WTC11 (cell line): ENCODE measurements at regions of chr2 and their contacts with region 1.

Region 1: DNA sequence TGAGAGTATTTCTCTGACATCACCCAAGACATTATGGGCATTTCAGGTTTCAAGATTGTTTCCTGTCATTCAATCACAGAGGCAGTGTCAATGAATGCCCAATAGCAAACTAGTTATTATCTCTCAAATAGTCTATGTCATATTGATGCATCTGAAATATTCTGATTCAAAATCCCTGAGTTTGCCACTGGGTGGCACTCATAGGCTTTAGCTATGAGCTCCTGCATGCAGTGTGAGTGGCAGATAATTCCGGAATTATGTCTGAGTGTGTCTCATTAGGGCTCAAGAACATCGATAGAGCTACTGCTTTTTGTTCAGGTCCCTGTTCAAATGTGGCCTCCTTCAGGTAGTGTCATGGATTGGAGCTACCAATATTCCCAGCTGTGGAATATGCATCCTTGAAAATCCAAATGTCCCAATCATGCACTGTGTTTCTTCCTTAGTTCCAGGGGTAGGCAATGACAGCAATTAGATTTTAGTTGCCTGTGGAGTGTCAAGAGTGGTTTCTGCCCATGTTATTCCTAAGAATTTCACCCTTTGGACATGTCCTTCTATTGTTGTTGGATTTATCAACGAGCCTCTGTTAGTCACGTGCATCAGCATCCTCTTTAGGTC is 7.8 kb upstream of the OR6B3 start:
- DNase-seq: no peak
- ATAC-seq: peak; percentile 85
- H3K4me3 Mint-ChIP-seq: no peak overlapping the region
- H3K27ac Mint-ChIP-seq: no peak overlapping the region
- H3K4me1 Mint-ChIP-seq: peaks cover 17% of the 10 kb centered on the region
- H3K27me3 Mint-ChIP-seq: no peaks in the 10 kb centered on the region; the same call in 1 of the 2 replicates
- CTCF ChIP-seq: peak; percentile 11; the same call in 1 of the 2 replicates

Region 2: GRCh38 chr2:239498981-239499634 is 562.0 kb before region 1 on chr2:
- CTCF ChIA-PET with region 1: no interaction called
- POLR2A ChIA-PET with region 1: no interaction called
- DNase-seq: no peak
- ATAC-seq: no peak
- H3K4me3 Mint-ChIP-seq: no peak overlapping the region
- H3K27ac Mint-ChIP-seq: no peak overlapping the region
- H3K4me1 Mint-ChIP-seq: no peaks in the 10 kb centered on the region
- H3K27me3 Mint-ChIP-seq: no peaks in the 10 kb centered on the region
- CTCF ChIP-seq: no peak

Region 3: DNA sequence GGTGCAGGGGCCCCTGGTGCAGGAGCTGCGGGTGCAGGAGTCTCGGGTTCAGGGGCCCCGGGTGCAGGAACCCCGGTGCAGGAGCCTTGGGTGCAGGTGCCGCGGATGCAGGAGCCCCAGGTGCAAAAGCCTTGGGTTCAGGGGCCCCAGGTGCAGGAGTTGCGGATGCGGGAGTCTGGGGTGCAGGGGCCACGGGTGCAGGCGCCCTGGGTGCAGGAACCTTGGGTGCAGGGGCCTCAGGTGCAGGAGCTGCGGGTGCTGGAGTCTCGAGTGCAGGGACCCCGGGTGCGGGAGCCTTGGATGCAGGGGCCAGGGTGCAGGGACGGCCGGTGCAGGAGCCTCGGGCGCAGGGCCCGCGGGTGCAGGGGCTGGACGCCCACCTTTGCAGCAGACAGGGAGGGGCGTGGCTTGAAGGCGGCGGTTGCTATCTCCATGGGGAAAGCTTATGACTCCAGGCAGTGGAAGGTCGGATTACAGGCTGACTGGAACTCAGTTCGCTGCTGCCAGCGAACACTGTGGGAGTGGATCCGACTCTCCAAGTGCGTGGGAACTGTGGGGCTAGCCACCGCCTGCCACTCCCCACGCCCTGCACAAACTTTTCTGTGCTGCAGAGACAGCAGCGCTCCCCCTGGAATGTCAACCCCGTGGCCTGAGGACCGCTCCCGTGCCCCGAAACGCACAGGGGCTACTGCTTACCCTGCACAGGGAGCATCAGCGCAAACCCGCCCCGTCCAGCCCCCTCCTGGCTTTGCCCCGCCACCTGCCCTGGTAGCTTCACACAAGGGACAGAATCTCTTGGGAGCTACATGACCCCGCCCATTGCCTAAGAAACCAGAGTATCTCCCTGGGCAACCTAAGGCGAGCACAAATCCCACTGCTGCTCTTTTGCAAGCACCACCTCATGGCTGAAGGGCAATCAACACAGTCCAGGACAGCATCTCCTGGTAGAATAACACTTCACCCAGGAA is 34.8 kb after region 1 on chr2:
- CTCF ChIA-PET with region 1: interaction called, 14 read pairs
- POLR2A ChIA-PET with region 1: no interaction called
- DNase-seq: peak; percentile 63
- ATAC-seq: peak; percentile 93
- H3K4me3 Mint-ChIP-seq: peak overlapping the region; percentile 81
- H3K27ac Mint-ChIP-seq: no peak overlapping the region
- H3K4me1 Mint-ChIP-seq: peaks cover 11% of the 10 kb centered on the region
- H3K27me3 Mint-ChIP-seq: peaks cover 46% of the 10 kb centered on the region
- CTCF ChIP-seq: no peak

Region 4: DNA sequence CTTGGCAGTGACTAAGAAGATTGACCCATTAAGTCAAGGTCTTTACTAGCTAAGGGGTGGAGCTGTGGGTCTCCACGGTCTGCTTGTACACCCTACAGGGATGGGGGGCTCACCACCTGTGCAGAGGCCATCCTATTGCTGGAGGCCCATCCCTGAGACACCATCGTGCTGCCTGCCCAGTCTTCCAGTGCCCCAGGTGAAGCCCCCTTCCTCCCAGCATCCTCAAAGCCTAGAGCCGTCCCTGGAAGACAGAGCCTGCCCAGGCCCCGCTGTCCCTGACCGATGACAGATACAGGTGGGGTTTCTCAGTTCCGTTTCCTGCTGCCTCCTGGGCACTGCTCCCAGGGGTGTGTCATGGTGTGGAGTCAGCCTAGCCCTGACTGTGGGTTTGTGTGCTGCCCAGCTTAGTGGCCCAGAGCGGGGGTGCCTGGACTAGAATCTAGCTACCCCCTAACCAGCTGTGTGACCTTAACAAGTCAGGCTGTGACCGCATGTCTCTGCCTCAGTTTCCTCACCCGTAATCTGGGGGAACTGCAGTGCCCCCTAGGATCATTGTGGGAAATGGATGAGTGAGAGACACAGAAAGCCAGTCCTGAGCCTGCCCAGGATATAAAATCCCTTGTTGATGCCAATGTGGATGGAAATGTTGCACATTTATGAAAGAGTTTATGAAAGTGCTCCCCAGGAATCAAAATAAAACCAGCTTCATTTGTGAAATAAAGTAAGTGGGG is 77.3 kb after region 1 on chr2:
- CTCF ChIA-PET with region 1: interaction called, 84 read pairs
- POLR2A ChIA-PET with region 1: no interaction called
- DNase-seq: no peak
- ATAC-seq: no peak
- H3K4me3 Mint-ChIP-seq: peak overlapping the region; percentile 24; the same call in 1 of the 2 replicates
- H3K27ac Mint-ChIP-seq: no peak overlapping the region
- H3K4me1 Mint-ChIP-seq: peaks cover 40% of the 10 kb centered on the region
- H3K27me3 Mint-ChIP-seq: peaks cover 9% of the 10 kb centered on the region
- CTCF ChIP-seq: no peak

Region 5: GRCh38 chr2:240143801-240144648 is 82.9 kb after region 1 on chr2:
- CTCF ChIA-PET with region 1: interaction called, 84 read pairs
- POLR2A ChIA-PET with region 1: no interaction called
- DNase-seq: peak; percentile 89
- ATAC-seq: peak; percentile 90
- H3K4me3 Mint-ChIP-seq: no peak overlapping the region
- H3K27ac Mint-ChIP-seq: no peak overlapping the region
- H3K4me1 Mint-ChIP-seq: peaks cover 15% of the 10 kb centered on the region
- H3K27me3 Mint-ChIP-seq: no peaks in the 10 kb centered on the region
- CTCF ChIP-seq: peak; percentile 92

Region 6: DNA sequence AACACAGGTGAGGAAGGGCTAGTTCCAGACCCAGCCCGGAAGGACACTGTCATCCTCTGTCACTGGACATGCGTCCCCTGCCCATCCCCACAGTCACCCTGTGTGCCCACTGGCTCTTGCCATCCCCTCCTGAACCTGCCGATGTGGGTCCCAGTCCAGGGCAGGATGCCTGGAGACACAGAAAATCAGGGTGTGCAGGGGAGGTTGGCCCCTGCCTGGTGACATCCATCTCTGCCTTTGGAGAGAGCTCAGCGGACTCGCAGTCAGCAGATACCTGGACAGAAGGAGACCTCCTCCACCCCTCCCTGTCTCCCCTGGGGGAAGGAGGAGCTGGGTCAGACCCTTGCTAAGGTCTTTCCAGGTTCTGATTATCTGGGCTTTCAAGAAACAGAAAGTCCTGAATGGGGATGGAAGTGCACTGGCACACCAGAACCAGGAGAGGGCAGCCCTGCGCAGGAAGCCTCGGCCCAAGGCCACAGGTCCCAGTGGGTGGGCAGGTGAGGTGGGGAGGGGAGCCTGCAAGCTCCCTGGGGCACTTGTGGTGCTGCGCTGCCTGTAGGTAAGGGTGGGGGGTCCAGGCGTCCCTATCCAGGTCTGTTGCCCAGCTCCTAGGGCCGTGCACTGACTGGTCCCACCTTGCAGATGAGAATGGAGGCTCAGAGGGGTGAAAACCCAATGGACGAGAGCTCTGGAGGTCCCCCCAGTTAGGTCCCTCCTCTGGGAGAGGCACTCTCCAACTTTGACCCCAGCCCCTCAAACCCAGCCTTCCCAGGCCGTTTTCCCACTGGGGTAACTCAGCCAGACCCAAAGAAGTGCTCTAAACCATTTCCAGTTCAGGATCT is 89.1 kb after region 1 on chr2:
- CTCF ChIA-PET with region 1: interaction called, 84 read pairs
- POLR2A ChIA-PET with region 1: no interaction called
- DNase-seq: peak; percentile 80
- ATAC-seq: peak; percentile 92
- H3K4me3 Mint-ChIP-seq: no peak overlapping the region
- H3K27ac Mint-ChIP-seq: no peak overlapping the region; the same call in 1 of the 2 replicates
- H3K4me1 Mint-ChIP-seq: no peaks in the 10 kb centered on the region
- H3K27me3 Mint-ChIP-seq: no peaks in the 10 kb centered on the region
- CTCF ChIP-seq: peak; percentile 64